ENCODE measurements at regions of chr2 and their contacts with region 1.

Region 1: DNA sequence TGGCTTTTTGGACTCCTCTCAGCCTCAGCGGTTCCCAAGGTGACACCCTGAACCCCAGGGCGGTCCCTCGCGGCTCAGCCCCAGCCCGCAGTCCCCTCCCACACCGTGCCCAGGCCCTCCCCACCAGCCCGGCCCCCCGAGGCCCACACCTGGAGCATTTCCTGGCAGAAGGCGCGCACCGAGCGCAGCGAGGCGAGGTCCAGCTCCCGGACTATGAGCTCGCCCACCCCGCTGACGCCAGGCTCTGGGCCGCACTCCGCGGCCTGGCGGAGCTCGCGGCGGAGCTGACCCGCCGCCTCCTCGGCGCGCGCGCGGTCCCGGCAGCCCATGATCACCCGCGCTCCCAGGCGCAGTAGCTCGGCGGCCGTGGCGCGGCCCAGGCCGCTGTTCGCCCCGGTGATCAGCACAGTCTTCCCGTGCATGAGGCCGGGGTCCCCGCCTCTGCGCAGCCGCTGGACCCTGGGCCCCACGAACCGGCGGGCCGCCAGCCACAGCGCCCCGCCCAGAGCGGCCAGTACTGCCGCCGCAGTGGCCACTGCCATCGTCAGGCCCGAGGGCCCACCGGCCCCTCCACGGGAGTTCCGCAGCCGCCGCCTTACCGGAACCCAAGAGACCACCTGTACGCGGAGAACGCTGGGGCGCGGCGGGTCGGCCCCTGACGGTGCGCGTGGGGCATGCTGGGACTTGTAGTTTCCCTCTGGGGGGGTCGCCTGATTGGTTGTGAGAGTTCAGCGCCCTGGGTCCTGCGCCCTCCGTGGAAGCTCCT is at the start of gene RDH14:
- DNase-seq: peak; percentile 97
- H3K4me3 Mint-ChIP-seq: peak within 1 kb of the TSS; percentile 94
- H3K27ac Mint-ChIP-seq: peak within 1 kb of the TSS; percentile 96
- H3K4me1 Mint-ChIP-seq: peaks cover 29% of the 10 kb centered on the region
- H3K27me3 Mint-ChIP-seq: no peaks in the 10 kb centered on the region
- total RNA-seq, gene RDH14: 14.2 and 15.1 TPM in 2 replicates

Region 2: DNA sequence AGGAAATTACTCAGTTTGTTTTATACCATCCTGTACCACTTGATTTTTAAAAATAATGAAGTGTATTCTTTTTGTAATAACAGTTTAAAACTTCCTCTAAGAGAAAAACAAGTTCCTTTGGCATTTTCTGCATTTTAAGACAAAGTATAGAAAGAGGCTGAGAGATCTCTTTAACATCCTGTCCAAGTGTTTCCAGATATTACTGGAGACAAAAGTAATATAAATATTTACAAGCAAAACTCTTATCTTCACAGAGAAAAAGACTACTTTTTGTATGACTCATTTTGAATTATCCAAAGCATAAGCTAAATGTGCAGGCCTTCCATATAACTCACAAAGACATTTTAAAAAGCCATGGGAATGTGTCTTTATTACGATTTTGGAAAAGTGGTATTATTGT is 220.9 kb before region 1 on chr2:
- intact Hi-C with region 1: no loop called
- DNase-seq: no peak
- H3K4me3 Mint-ChIP-seq: no peak overlapping the region
- H3K27ac Mint-ChIP-seq: no peak overlapping the region
- H3K4me1 Mint-ChIP-seq: no peaks in the 10 kb centered on the region
- H3K27me3 Mint-ChIP-seq: no peaks in the 10 kb centered on the region

Region 3: GRCh38 chr2:18545384-18545783 is 14.8 kb before region 1 on chr2:
- intact Hi-C with region 1: loop called (anchors 2 kb)
- DNase-seq: peak; percentile 48
- H3K4me3 Mint-ChIP-seq: no peak overlapping the region
- H3K27ac Mint-ChIP-seq: no peak overlapping the region
- H3K4me1 Mint-ChIP-seq: peaks cover 30% of the 10 kb centered on the region
- H3K27me3 Mint-ChIP-seq: peaks cover 2% of the 10 kb centered on the region

Region 4: GRCh38 chr2:18599509-18600254 is 39.5 kb after region 1 on chr2:
- intact Hi-C with region 1: no loop called
- DNase-seq: no peak
- H3K4me3 Mint-ChIP-seq: no peak overlapping the region
- H3K27ac Mint-ChIP-seq: no peak overlapping the region
- H3K4me1 Mint-ChIP-seq: no peaks in the 10 kb centered on the region
- H3K27me3 Mint-ChIP-seq: no peaks in the 10 kb centered on the region

Region 5: GRCh38 chr2:19989681-19990415 is 1429.6 kb after region 1 on chr2 and contains the start of gene WDR35:
- intact Hi-C with region 1: loop called (anchors 10 kb)
- DNase-seq: peak; percentile 98
- H3K4me3 Mint-ChIP-seq: peak within 1 kb of the TSS; percentile 92
- H3K27ac Mint-ChIP-seq: peak within 1 kb of the TSS; percentile 88
- H3K4me1 Mint-ChIP-seq: peaks cover 15% of the 10 kb centered on the region
- H3K27me3 Mint-ChIP-seq: peaks cover 28% of the 10 kb centered on the region
- total RNA-seq, gene WDR35: 8.1 and 9.0 TPM in 2 replicates